Endothelial cell of umbilical vein (primary cell): ENCODE measurements at regions of chr6 and their contacts with region 1.

Region 1: DNA sequence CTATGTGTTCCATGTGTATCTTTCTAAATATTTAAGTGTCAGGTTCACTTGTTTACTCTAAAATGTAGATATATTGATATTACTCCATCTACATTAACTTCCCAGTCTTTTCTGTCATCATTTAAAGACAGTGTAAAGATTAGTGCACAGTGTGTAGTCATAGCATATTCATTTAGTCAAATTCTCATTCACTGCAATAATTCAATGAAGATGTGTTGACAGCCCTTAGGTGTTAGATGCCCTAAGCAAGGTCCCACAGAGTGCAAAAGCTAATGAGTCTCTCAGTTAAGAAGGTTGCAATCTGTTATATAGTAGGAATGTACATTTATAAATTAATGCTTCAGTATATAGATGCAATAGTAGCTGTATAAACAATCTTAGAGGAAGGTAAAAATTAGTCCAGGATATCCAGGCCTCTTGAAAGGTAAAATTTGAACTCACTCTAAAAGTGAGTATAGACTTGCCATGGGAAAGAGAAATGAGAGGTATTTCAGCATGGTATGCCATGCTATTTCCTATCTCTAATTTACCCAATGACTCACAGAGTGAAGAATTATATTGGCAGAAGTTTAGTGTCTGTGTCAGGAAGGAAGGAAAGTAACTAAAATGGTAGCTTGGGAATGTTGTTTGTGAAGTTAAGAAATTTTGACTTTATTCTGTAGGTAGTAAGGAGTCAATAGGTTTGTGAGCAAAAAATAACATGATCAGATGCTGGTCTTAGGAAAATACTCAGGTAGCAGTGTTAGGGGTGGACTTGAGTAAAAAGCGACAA is 969.9 kb upstream of the CITED2 start:
- DNase-seq: peak; percentile 70
- H3K4me3 ChIP-seq: no peak overlapping the region
- H3K27ac ChIP-seq: peak overlapping the region; percentile 77
- H3K4me1 ChIP-seq: peaks cover 40% of the 10 kb centered on the region
- H3K27me3 ChIP-seq: no peaks in the 10 kb centered on the region
- CTCF ChIP-seq: no peak
- POLR2A ChIP-seq: peak; percentile 39

Region 2: DNA sequence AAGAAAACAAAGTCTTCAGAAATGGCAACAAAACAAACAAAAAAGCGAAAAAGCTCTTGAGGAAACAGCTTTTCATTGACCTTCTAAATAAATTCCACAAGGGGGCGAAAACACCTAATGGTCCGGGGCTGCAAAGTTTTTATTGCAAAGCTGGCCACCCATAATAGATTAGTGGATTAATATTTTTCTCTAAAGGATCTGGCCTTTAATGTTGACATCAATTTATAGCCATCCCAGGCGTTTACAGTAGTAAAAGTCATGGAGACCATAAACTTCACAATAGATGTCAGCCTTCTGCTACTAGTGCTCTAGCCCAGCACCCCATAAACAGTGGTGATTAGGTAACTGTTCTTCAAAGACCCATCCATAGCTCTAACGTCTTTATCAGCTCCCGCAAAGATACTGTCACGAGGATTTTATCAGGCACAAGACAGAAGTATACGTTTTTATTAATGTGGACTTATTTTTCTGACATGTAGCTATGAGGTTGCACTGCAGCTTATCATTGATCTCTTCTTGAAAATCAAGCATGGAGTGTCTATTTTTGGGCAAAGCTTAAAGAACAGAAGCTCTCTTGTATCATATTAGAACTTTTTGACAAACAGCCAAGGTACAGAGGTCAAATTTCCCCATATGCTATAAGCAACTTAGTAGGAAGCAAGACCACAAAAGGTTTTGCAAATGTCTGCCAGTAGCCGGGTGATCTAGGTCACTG is 974.6 kb before region 1 on chr6:
- CTCF ChIA-PET with region 1: interaction called, 26 read pairs
- POLR2A ChIA-PET with region 1: interaction called, 17 read pairs
- dilution Hi-C with region 1: no loop called
- intact Hi-C with region 1: loop called (anchors 1 kb)
- DNase-seq: peak; percentile 68
- H3K4me3 ChIP-seq: no peak overlapping the region
- H3K27ac ChIP-seq: no peak overlapping the region
- H3K4me1 ChIP-seq: peaks cover 41% of the 10 kb centered on the region
- H3K27me3 ChIP-seq: no peaks in the 10 kb centered on the region
- CTCF ChIP-seq: peak; percentile 43 to 46
- POLR2A ChIP-seq: no peak

Region 3: DNA sequence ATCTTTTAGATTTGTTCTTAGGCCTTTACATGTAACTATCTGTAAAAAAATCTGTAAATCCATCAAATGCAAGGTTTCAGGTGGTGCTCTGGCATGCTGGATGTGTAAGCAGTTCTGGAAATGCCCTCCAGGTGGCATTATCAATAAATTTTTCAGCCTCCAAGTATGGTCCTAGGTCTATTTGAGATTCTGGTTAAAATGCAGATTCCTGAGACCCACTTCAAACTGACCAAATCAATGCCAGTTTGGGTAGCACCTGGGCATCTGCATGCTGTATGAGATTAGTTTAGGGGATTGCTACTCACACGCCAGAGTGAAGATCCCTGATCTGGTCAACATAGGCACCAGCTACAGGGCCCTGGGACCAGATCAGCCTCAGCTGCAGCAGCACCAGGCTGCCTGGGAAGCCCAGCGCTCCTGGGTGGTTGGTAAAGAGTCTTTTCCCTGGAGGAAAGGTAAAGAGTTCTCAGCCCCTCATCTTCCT is 462.6 kb before region 1 on chr6:
- CTCF ChIA-PET with region 1: interaction called, 3 read pairs
- POLR2A ChIA-PET with region 1: no interaction called
- dilution Hi-C with region 1: no loop called
- intact Hi-C with region 1: loop called (anchors 1 kb)
- DNase-seq: peak; percentile 69
- H3K4me3 ChIP-seq: no peak overlapping the region
- H3K27ac ChIP-seq: no peak overlapping the region
- H3K4me1 ChIP-seq: peaks cover 14% of the 10 kb centered on the region
- H3K27me3 ChIP-seq: no peaks in the 10 kb centered on the region
- CTCF ChIP-seq: peak; percentile 42 to 49
- POLR2A ChIP-seq: no peak

Region 4: DNA sequence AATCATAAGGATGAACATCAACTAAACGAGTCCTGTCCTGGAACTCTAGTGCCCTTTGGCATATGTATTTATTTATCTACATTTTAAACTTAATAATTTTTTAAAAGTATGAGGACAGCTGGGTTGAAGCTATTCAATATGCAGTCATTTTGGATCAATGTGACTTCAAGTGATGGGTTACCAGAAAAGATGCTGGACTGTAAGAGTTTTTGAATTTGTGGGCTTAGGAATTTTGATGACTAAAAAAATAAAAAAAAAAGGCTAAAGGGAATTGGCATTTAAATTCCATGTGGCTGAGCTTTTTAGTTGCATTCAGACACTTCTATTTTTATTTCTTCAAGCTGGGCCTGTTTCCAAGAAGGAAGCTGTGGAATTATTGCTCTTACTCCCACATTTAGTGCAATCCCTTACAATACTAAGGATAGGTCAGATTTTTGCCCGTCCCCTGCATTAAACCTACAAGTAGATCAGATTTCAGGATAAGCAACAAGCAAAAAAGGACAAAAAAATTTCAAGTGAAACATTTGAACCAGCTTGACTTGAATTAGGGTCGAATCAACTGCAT is 265.7 kb before region 1 on chr6:
- CTCF ChIA-PET with region 1: no interaction called
- POLR2A ChIA-PET with region 1: no interaction called
- dilution Hi-C with region 1: no loop called
- intact Hi-C with region 1: loop called (anchors 5 kb)
- DNase-seq: peak; percentile 80
- H3K4me3 ChIP-seq: no peak overlapping the region
- H3K27ac ChIP-seq: no peak overlapping the region
- H3K4me1 ChIP-seq: peaks cover 15% of the 10 kb centered on the region
- H3K27me3 ChIP-seq: no peaks in the 10 kb centered on the region
- CTCF ChIP-seq: no peak
- POLR2A ChIP-seq: no peak

Region 5: GRCh38 chr6:140271759-140272377 is 72.5 kb before region 1 on chr6:
- CTCF ChIA-PET with region 1: no interaction called
- POLR2A ChIA-PET with region 1: no interaction called
- dilution Hi-C with region 1: no loop called
- intact Hi-C with region 1: loop called (anchors 1 kb)
- DNase-seq: peak; percentile 73
- H3K4me3 ChIP-seq: no peak overlapping the region
- H3K27ac ChIP-seq: no peak overlapping the region
- H3K4me1 ChIP-seq: peaks cover 8% of the 10 kb centered on the region
- H3K27me3 ChIP-seq: no peaks in the 10 kb centered on the region
- CTCF ChIP-seq: no peak
- POLR2A ChIP-seq: no peak

Region 6: DNA sequence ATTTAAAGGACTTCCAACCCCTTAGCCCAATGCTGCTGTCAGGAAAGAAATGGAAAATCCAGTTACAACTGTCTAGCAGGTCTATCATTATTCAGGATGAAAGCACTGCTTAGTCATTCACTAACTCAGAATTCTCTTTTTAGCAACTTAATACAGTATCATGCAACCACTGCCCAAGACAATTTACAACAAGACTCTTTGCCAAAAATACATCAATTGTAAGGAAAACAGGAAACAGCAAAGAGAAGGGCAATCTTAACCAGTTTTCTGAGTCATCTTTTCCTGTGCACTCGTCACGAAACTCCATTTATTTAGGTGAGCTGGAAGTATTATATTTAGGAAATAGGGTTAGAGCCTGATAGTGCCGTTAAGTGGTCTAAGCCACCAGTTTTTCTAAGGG is 227.8 kb after region 1 on chr6:
- CTCF ChIA-PET with region 1: no interaction called
- POLR2A ChIA-PET with region 1: no interaction called
- dilution Hi-C with region 1: no loop called
- intact Hi-C with region 1: loop called (anchors 1 kb)
- DNase-seq: peak; percentile 96
- H3K4me3 ChIP-seq: no peak overlapping the region
- H3K27ac ChIP-seq: peak overlapping the region; percentile 84
- H3K4me1 ChIP-seq: peaks cover 24% of the 10 kb centered on the region
- H3K27me3 ChIP-seq: no peaks in the 10 kb centered on the region
- CTCF ChIP-seq: no peak
- POLR2A ChIP-seq: peak; percentile 44

Region 7: DNA sequence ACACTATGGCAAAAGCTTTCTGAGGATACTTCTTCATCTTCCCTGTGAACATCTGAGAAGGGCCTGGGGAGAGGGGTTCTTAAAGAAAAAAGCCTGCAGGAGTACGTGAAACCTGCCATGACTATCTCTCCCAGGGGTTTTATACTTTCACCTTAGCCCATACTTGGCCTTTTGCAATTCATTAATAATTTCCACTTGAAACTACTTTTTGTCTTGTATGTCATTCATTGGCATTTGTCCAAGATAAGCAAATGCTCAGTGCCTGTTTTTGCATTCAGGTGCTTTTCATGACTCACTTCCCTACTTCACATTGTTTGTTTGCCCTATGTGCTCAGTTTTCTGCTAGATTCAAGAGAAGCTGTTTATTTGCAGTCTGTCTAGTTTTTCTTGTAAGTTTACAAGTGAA is 1208.1 kb after region 1 on chr6:
- CTCF ChIA-PET with region 1: interaction called, 3 read pairs
- POLR2A ChIA-PET with region 1: no interaction called
- dilution Hi-C with region 1: no loop called
- intact Hi-C with region 1: loop called (anchors 1 kb)
- DNase-seq: peak; percentile 98
- H3K4me3 ChIP-seq: peak overlapping the region in 1 of 3 experiments; percentile 30
- H3K27ac ChIP-seq: peak overlapping the region; percentile 80
- H3K4me1 ChIP-seq: peaks cover 17% of the 10 kb centered on the region
- H3K27me3 ChIP-seq: no peaks in the 10 kb centered on the region
- CTCF ChIP-seq: no peak
- POLR2A ChIP-seq: peak; percentile 60